Breast epithelium (tissue), 4 donors: ENCODE measurements at regions of chrX and their contacts with region 1.

Region 1: GRCh38 chrX:34839451-34839850 is 103.1 kb upstream of the FAM47B start:
- DNase-seq: no peak
- H3K4me3 ChIP-seq: no peak overlapping the region
- H3K27ac ChIP-seq: no peak overlapping the region
- H3K4me1 ChIP-seq: no peaks in the 10 kb centered on the region
- H3K27me3 ChIP-seq: no peaks in the 10 kb centered on the region
- CTCF ChIP-seq: no peak
- POLR2A ChIP-seq: no peak

Region 2: DNA sequence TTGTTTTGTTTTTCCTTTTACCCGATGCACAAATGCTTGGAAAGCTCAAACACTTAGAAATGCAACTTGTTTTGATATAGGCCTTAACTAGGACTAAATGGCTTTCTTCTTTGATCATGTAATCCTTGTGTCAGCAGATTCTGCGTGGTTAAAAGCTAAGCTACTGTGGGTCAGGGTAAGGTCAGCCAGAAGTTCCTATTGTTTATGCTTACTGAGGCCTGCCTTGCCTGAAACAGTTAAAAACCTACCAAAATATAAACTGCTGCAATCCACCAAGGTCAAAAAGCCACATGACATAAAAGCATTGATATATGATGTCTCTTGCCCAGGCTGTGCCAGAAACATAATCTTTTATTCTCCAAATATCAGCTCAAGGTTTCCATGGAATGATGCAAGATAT is 326.6 kb after region 1 on chrX:
- intact Hi-C with region 1: loop called (anchors 5 kb)
- DNase-seq: no peak
- H3K4me3 ChIP-seq: no peak overlapping the region
- H3K27ac ChIP-seq: no peak overlapping the region
- H3K4me1 ChIP-seq: no peaks in the 10 kb centered on the region
- H3K27me3 ChIP-seq: no peaks in the 10 kb centered on the region
- CTCF ChIP-seq: no peak
- POLR2A ChIP-seq: no peak

Region 3: GRCh38 chrX:35285289-35285962 is 446.0 kb after region 1 on chrX:
- intact Hi-C with region 1: no loop called
- DNase-seq: no peak
- H3K4me3 ChIP-seq: no peak overlapping the region
- H3K27ac ChIP-seq: no peak overlapping the region
- H3K4me1 ChIP-seq: no peaks in the 10 kb centered on the region
- H3K27me3 ChIP-seq: peaks cover 0 to 3% of the 10 kb centered on the region in 2 donors
- CTCF ChIP-seq: no peak
- POLR2A ChIP-seq: no peak